Aorta (tissue), 5 donors: ENCODE measurements at regions of chr2 and their contacts with region 1.

Region 1: DNA sequence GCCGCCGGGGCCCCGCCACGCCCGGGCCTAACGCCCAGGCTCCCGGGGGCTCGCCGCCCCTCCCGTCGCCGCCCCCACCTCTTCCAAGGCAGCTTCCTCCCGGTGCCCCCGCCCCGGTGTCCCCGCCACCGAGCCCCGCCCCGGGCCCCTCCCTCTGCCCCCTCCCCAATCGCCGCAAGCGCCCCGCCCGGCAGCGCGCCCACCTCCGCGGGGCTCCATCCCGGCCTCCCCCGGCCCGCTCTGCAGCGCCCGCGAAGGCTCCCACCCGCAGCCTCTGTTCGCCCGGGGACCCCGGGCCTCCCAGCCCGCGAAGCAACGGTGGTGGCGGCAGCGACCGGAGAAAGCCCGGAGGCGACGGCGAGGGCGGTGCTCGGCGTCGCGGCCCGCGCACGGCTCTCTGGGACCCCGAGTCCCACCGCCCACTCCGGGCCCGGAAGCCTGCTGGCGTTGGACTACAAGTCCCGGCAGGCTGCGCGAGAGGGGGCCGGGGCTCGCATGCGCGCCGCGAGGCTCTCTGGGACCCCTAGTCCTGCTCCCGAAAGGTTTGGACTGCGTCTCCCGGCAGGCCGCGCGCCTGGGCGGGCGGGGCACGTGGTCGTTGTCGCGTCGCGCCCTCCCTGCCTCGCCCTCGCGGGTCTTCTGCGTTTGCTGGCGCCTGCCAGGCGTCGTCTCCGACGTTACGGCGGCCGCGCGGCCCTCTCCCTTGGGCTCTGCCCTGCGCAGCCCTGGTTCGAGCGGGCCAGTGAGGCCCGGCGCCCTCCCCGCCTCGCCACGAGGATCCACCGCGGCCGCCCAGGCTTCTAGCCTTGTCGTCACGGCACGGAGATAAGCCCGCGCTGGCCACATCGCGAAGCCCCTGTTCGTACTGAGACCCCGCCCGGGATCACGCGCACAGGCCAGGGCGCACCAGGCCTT is at the start of gene STK25:
- DNase-seq: peak; percentile 99
- ATAC-seq: peak; percentile 97
- H3K4me3 ChIP-seq: peak within 1 kb of the TSS; percentile 83 to 85
- H3K27ac ChIP-seq: no peak within 1 kb of the TSS
- H3K4me1 ChIP-seq: no peaks in the 10 kb centered on the region
- H3K27me3 ChIP-seq: no peaks in the 10 kb centered on the region
- total RNA-seq, gene STK25: 101 to 142 TPM

Region 2: DNA sequence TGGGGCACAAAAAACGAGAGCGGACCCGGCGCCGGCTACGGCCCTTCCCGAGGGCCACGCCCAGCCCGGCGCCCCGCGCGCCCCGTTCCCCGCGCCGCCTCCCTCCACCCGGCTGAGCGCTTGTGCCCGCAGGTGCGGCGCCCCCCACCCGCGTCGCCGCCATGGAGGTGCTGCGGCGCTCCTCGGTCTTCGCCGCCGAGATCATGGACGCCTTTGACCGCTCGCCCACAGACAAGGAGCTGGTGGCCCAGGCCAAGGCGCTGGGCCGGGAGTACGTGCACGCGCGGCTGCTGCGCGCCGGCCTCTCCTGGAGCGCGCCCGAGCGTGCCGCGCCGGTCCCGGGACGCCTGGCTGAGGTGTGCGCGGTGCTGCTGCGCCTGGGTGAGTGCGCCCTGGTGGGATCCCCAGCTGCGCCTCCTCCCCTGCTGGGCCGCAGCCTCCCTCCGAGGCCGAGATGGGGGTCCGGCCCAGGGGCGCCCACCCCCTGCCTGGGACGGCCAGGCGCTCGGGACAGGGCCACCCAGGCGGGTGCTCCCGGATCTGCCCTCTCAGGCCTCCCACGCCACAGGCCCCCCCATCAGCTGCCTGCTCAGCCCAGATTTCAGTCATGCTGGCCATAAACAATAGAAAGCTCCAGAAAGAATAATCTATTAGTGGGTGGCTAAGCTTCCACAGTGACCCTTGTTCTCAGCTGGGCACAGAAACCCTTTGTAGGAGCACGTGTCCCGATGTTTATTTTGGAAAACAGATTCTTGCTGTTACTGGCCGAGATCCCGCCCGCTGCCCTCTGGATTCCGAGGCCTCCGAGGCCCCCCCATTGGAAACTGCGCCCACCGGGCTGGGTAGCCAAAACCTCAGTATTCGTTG is 51.1 kb after region 1 on chr2:
- intact Hi-C with region 1: loop called in 1 of 2 experiments (anchors 5 kb)
- DNase-seq: no peak
- ATAC-seq: peak; percentile 51
- H3K4me3 ChIP-seq: peak overlapping the region; percentile 28 to 34
- H3K27ac ChIP-seq: no peak overlapping the region
- H3K4me1 ChIP-seq: no peaks in the 10 kb centered on the region
- H3K27me3 ChIP-seq: no peaks in the 10 kb centered on the region

Region 3: GRCh38 chr2:241609859-241610793 is 101.6 kb after region 1 on chr2:
- intact Hi-C with region 1: loop called in 1 of 2 experiments (anchors 5 kb)
- DNase-seq: peak; percentile 88 to 96
- ATAC-seq: peak; percentile 93
- H3K4me3 ChIP-seq: peak overlapping the region; percentile 39 to 42
- H3K27ac ChIP-seq: peak overlapping the region in 1 of 2 donors; percentile 25
- H3K4me1 ChIP-seq: no peaks in the 10 kb centered on the region
- H3K27me3 ChIP-seq: no peaks in the 10 kb centered on the region